Ovary (tissue), 10 donors: ENCODE measurements at regions of chr18 and their contacts with region 1.

Region 1: GRCh38 chr18:25334588-25334987 is 17.4 kb downstream of the ZNF521 start:
- DNase-seq: no peak
- H3K4me3 ChIP-seq: no peak overlapping the region
- H3K27ac ChIP-seq: no peak overlapping the region
- H3K4me1 ChIP-seq: peaks cover 1% of the 10 kb centered on the region
- H3K27me3 ChIP-seq: no peaks in the 10 kb centered on the region
- CTCF ChIP-seq: no peak
- EP300 ChIP-seq: no peak
- POLR2A ChIP-seq: no peak

Region 2: GRCh38 chr18:25289001-25289631 is 45.5 kb before region 1 on chr18:
- intact Hi-C with region 1: loop called in 1 of 4 experiments (anchors 10 kb)
- DNase-seq: peak in 1 of 5 donors; percentile 32
- H3K4me3 ChIP-seq: no peak overlapping the region
- H3K27ac ChIP-seq: no peak overlapping the region
- H3K4me1 ChIP-seq: peaks cover 3% of the 10 kb centered on the region
- H3K27me3 ChIP-seq: no peaks in the 10 kb centered on the region
- CTCF ChIP-seq: no peak
- EP300 ChIP-seq: no peak
- POLR2A ChIP-seq: no peak